ENCODE measurements at regions of chr16 and their contacts with region 1.

Region 1: GRCh38 chr16:2520092-2520783 is at the start of gene AMDHD2:
- DNase-seq: peak; percentile 87 to 94 (median 94)
- H3K4me3 ChIP-seq: peak within 1 kb of the TSS; percentile 16 to 80 (median 66)
- H3K27ac ChIP-seq: peak within 1 kb of the TSS in 1 of 2 experiments; percentile 43
- H3K4me1 ChIP-seq: peaks cover 10 to 57% (median 56%) of the 10 kb centered on the region in 4 experiments
- H3K27me3 ChIP-seq: no peaks in the 10 kb centered on the region

Region 2: GRCh38 chr16:2447920-2448583 is 72.2 kb before region 1 on chr16:
- CTCF ChIA-PET with region 1: no interaction called
- POLR2A ChIA-PET with region 1: no interaction called
- DNase-seq: no peak
- H3K4me3 ChIP-seq: no peak overlapping the region
- H3K27ac ChIP-seq: no peak overlapping the region
- H3K4me1 ChIP-seq: no peaks in the 10 kb centered on the region
- H3K27me3 ChIP-seq: no peaks in the 10 kb centered on the region

Region 3: GRCh38 chr16:2473999-2474876 is 46.0 kb before region 1 on chr16:
- CTCF ChIA-PET with region 1: no interaction called
- POLR2A ChIA-PET with region 1: no interaction called
- DNase-seq: peak; percentile 36 to 64 (median 57)
- H3K4me3 ChIP-seq: peak overlapping the region; percentile 47 to 82 (median 72)
- H3K27ac ChIP-seq: peak overlapping the region in 1 of 2 experiments; percentile 77
- H3K4me1 ChIP-seq: peaks cover 4 to 46% (median 43%) of the 10 kb centered on the region in 4 experiments
- H3K27me3 ChIP-seq: peaks cover 0 to 43% (median 17%) of the 10 kb centered on the region in 5 experiments

Region 4: DNA sequence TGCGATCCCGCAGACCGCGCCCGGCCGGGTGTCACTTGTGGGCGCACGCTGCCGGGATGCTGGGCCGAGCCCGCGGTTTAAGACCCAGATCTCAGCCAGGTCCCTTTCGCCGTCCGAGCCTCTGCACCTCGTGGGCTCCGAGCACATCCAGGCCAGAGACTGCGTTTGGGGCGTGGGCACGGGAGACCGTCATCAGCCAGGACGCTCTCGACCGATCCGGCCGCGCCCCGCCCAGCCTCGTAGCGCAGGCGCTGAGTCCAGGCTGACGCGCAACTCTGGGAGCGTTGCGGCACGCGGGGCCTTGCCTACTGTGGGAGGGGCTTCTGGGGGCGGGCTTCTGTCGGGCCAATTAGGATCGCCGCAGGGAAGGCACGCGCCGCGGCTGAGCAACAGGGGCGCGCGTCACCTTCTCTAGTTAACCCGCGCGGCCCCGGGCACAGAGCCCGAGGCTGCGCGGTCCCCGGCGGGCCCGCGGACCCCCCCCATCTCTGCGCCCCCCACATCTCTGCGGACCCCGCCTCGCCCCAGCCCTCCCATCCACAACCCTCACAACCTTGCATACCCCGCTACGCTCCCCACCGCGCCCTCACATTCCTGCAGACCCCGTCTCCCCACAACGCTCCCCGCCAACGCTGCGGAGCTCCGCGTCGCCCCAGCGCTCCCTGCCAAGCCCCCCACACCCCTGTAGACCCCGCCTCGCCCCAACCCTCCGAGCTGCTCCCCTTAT is 11.7 kb after region 1 on chr16:
- CTCF ChIA-PET with region 1: interaction called, 7 read pairs
- POLR2A ChIA-PET with region 1: interaction called, 24 read pairs
- DNase-seq: peak; percentile 93 to 97 (median 96)
- H3K4me3 ChIP-seq: peak overlapping the region; percentile 50 to 81 (median 73)
- H3K27ac ChIP-seq: peak overlapping the region in 1 of 2 experiments; percentile 76
- H3K4me1 ChIP-seq: peaks cover 0 to 20% (median 17%) of the 10 kb centered on the region in 4 experiments
- H3K27me3 ChIP-seq: no peaks in the 10 kb centered on the region

Region 5: GRCh38 chr16:2897113-2897512 is 376.9 kb after region 1 on chr16:
- CTCF ChIA-PET with region 1: no interaction called
- POLR2A ChIA-PET with region 1: no interaction called
- DNase-seq: no peak
- H3K4me3 ChIP-seq: no peak overlapping the region
- H3K27ac ChIP-seq: no peak overlapping the region
- H3K4me1 ChIP-seq: no peaks in the 10 kb centered on the region
- H3K27me3 ChIP-seq: no peaks in the 10 kb centered on the region

Measured in common myeloid progenitor, CD34-positive (primary cell).